Activated CD4-positive, alpha-beta T cell treated with anti-CD3 and anti-CD28 coated beads, Interleukin-2, amount 10 ng/mL, durations not matched to agents 24 days and 14 days (primary cell): ENCODE measurements at regions of chr13 and their contacts with region 1.

Region 1: GRCh38 chr13:78022164-78022877 is 103.7 kb upstream of the EDNRB start:
- DNase-seq: peak; percentile 81
- H3K4me3 Mint-ChIP-seq: no peak overlapping the region
- H3K27ac Mint-ChIP-seq: peak overlapping the region; percentile 36
- H3K4me1 Mint-ChIP-seq: peaks cover 8% of the 10 kb centered on the region
- H3K27me3 Mint-ChIP-seq: peaks cover 12% of the 10 kb centered on the region

Region 2: DNA sequence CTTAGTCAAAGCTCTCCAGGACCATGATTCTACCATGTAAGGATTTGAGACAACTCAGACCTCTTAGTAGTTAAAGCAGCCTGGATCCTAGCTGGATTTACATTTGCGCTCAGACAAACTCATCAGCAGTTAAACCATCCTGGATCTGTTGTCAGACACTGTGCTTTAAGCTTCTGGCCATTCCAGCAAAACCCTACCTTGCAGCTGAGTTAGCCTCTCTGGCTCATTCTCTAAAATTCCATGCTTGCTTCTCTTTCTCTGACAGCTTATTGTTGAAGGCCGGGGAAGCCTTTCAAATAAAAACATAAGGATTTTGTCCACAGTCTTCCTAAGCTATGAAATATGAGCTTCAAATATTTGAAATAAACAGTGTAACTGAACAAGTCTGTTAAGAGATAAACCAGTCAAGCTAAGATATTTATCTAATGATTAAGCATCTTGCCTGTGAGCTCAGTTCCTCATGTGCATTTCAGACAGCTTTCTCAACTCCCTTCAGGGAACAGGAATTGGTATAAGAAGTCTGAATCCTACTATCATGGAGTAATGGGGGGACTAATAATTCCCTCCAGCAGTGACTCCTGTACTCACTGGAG is 235.5 kb before region 1 on chr13:
- intact Hi-C with region 1: no loop called
- DNase-seq: no peak
- H3K4me3 Mint-ChIP-seq: no peak overlapping the region
- H3K27ac Mint-ChIP-seq: no peak overlapping the region
- H3K4me1 Mint-ChIP-seq: no peaks in the 10 kb centered on the region
- H3K27me3 Mint-ChIP-seq: no peaks in the 10 kb centered on the region

Region 3: DNA sequence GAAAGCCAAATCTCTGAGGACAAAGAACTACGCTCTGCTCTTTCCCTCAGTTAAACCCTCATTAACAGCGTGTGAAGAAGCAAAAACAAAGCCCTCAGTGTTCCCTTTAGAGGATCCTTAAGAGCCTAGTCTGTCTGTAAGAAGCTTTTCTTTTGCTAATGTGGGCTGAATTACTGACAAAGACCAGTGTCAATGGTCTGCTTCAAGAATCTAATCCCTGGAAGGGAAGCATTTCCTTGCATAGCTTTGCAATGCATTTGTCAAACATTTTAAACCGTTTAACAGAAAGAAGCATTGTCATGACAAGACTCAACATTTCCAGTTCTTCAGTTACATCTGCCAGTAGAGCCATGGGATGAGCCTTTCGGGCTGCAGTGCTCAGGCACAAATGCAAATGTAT is 168.6 kb before region 1 on chr13:
- intact Hi-C with region 1: no loop called
- DNase-seq: no peak
- H3K4me3 Mint-ChIP-seq: no peak overlapping the region
- H3K27ac Mint-ChIP-seq: no peak overlapping the region
- H3K4me1 Mint-ChIP-seq: no peaks in the 10 kb centered on the region
- H3K27me3 Mint-ChIP-seq: no peaks in the 10 kb centered on the region

Region 4: DNA sequence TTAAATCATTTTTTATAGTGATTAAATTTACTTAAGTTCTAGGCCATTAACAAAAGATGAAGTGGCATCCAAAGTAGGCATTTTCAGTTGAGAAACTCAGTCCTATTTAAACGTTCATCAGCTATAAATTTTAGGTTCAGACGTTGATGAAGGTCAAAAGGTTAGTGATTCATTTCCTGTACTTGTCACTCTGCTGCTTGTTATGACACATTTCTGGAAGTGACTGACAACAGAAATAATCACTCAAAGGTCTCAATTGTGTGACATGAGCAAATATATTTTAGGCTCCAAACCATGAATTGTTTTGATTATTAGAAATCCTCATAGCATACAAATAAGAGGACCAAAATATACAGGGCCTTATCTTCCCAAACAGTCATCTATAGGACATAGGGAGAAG is 93.4 kb before region 1 on chr13:
- intact Hi-C with region 1: loop called (anchors 2 kb)
- DNase-seq: no peak
- H3K4me3 Mint-ChIP-seq: no peak overlapping the region
- H3K27ac Mint-ChIP-seq: no peak overlapping the region
- H3K4me1 Mint-ChIP-seq: peaks cover 14% of the 10 kb centered on the region
- H3K27me3 Mint-ChIP-seq: peaks cover 10% of the 10 kb centered on the region